Activated naive CD4-positive, alpha-beta T cell treated with anti-CD3 and anti-CD28 coated beads for 36 hours (primary cell): ENCODE measurements at regions of chr5 and their contacts with region 1.

Region 1: DNA sequence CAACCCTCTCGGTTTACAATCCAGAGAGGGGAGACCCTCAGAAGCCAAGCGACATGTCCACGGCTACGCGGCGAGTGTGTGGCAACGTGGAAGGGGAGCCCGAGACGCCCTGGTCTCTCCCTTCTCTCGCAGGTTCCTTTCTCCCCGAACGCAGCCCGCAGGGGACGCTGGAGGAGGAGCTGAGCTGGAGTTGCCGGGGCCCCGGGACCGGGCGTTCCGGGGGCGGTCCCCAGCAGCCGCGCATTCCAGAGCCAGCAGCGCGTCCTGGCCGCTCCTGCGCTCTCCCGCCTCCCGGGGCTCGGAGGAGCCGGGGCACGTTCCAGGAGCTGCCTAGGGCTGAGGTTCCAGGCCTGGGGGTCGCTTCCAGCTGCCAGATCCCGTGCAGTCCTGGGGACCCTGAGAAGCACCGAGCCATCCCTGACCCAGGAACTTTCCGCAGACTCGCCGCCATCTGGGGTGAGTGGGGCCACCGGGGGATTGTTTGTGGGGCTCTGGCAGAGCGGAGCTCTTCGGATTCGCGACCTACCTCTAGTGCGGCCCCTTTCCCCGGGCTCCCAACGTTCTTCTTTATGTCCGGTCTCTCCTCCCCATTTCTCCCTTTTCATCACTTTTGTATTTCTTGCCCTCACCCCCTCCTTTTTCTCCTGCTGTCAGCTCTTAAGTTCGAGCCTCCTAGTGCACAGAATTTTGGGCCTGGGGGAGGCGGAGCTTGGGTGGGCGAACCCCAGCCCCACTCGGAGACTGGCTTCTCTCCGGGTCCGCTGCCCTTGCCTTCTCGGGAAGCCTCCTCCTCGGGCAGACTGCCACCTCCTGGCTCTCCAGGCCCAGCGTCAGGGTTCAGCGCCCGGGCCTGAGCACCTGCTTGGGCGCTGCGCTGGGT is at the start of gene SMIM3:
- DNase-seq: peak; percentile 86
- H3K4me3 Mint-ChIP-seq: peak within 1 kb of the TSS; percentile 99
- H3K27ac Mint-ChIP-seq: peak within 1 kb of the TSS; percentile 93
- H3K4me1 Mint-ChIP-seq: peaks cover 48% of the 10 kb centered on the region
- H3K27me3 Mint-ChIP-seq: no peaks in the 10 kb centered on the region
- total RNA-seq, gene SMIM3: 32.9 to 37.4 TPM

Region 2: DNA sequence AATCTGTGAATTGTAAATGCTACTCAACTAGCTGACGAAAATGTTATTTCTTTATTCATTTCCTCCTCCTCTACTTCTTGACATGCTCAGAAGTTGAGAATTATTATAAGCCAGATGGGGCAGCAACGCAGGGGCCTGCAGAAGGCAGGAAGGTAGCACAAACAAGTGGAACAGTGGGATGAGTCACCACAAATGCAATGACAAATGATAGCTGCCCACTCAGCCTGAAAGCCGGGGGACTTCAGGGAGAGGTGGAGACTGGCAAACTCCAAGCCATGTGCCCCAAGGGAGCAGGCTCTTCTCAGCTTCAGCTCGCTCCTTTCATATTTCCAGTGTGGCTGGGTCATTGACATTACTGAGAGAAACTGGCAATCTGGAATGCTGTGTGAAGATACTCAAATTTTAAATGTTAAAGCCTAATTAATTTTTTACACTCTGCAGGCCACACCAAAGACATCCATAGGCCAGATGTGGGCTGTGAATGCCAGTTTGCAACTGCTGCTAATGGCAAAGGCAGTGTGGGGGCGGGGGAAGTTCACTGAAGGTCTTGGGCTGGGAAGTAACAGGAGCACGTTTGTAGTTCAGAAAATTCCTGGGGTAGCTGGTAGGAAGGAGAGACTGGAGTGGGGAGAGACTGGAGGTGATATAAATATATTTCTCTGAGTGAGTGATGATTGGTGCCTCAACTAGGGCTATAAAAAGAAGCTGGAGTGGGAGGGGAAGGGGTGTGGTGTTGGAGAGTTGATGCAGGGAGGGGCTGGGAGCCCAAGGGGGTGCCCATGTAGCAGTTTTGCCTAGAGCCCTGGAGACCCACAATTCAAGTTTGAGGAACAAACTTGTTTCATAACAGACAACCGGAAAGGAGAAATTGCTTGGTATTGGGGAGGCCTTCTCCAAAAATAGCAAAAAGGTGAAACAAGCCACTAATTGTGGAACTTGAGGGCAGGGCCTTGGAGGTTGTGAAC is 1973.1 kb before region 1 on chr5:
- CTCF ChIA-PET with region 1: no interaction called
- intact Hi-C with region 1: loop called (anchors 10 kb)
- DNase-seq: peak; percentile 61
- H3K4me3 Mint-ChIP-seq: no peak overlapping the region
- H3K27ac Mint-ChIP-seq: no peak overlapping the region
- H3K4me1 Mint-ChIP-seq: peaks cover 58% of the 10 kb centered on the region
- H3K27me3 Mint-ChIP-seq: peaks cover 15% of the 10 kb centered on the region

Region 3: GRCh38 chr5:150560401-150561193 is 218.2 kb before region 1 on chr5:
- CTCF ChIA-PET with region 1: interaction called, 30 read pairs
- intact Hi-C with region 1: loop called (anchors 1 kb)
- DNase-seq: peak; percentile 96
- H3K4me3 Mint-ChIP-seq: no peak overlapping the region
- H3K27ac Mint-ChIP-seq: no peak overlapping the region
- H3K4me1 Mint-ChIP-seq: no peaks in the 10 kb centered on the region
- H3K27me3 Mint-ChIP-seq: no peaks in the 10 kb centered on the region

Region 4: GRCh38 chr5:150740992-150741391 is 37.8 kb before region 1 on chr5:
- CTCF ChIA-PET with region 1: interaction called, 10 read pairs
- intact Hi-C with region 1: loop called (anchors 1 kb)
- DNase-seq: peak; percentile 30
- H3K4me3 Mint-ChIP-seq: no peak overlapping the region
- H3K27ac Mint-ChIP-seq: peak overlapping the region; percentile 86
- H3K4me1 Mint-ChIP-seq: peaks cover 87% of the 10 kb centered on the region
- H3K27me3 Mint-ChIP-seq: no peaks in the 10 kb centered on the region

Region 5: GRCh38 chr5:150801117-150801927 is 22.6 kb after region 1 on chr5:
- CTCF ChIA-PET with region 1: interaction called, 18 read pairs
- intact Hi-C with region 1: loop called (anchors 1 kb)
- DNase-seq: peak; percentile 31
- H3K4me3 Mint-ChIP-seq: no peak overlapping the region
- H3K27ac Mint-ChIP-seq: no peak overlapping the region
- H3K4me1 Mint-ChIP-seq: peaks cover 31% of the 10 kb centered on the region
- H3K27me3 Mint-ChIP-seq: no peaks in the 10 kb centered on the region

Region 6: GRCh38 chr5:151213800-151214613 is 435.2 kb after region 1 on chr5:
- CTCF ChIA-PET with region 1: no interaction called
- intact Hi-C with region 1: loop called (anchors 5 kb)
- DNase-seq: peak; percentile 95
- H3K4me3 Mint-ChIP-seq: peak overlapping the region; percentile 83
- H3K27ac Mint-ChIP-seq: peak overlapping the region; percentile 98
- H3K4me1 Mint-ChIP-seq: peaks cover 76% of the 10 kb centered on the region
- H3K27me3 Mint-ChIP-seq: no peaks in the 10 kb centered on the region

Region 7: GRCh38 chr5:151233616-151234085 is 454.9 kb after region 1 on chr5:
- CTCF ChIA-PET with region 1: no interaction called
- intact Hi-C with region 1: no loop called
- DNase-seq: no peak
- H3K4me3 Mint-ChIP-seq: no peak overlapping the region
- H3K27ac Mint-ChIP-seq: no peak overlapping the region
- H3K4me1 Mint-ChIP-seq: peaks cover 14% of the 10 kb centered on the region
- H3K27me3 Mint-ChIP-seq: no peaks in the 10 kb centered on the region